ENCODE measurements at regions of chr19 and their contacts with region 1.

Region 1: DNA sequence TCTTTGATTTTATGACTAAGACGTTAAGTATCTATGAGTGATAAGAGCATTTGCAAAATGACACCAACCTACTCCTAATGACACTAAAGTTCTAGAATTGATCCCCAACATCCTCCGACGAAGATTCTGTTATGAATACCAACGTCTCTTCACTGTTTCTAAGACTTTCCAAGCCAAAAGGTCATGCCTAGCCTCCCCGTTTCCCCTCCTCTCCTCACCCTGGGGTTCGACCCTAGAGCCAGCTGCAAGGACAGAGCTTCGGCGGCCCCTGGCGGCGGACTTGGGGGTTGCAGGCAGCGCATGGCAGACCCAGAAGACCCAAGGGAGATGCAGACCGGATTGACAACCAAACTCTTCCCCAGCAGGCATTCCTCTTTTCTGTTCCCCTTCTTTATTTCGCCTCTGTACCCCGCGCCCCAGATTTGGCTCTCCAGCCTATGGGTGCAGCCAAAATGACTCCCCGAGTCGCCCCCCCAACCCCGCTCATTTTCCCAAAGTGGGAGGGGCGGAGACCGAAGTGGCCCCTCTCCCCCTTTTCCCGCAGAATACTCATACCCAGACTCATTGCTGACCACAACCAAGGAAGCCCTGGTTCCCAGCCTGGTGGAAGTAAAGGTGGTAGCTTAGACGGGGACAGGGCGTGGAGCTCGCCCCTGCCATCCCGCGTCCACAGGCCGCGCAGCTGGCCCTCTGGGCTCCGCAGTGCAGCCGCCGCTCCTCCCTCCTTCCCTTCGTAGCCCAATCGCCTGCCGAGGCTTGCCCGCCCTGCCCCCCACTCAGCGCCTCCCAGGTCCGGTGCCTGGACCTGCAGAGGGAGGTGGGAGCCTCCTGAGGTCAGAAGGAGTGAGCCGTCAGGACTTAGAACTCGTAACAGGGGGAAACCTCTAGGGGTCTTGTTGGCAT is 4.1 kb upstream of the EML2 start:
- DNase-seq: peak; percentile 94
- H3K4me3 Mint-ChIP-seq: peak overlapping the region; percentile 63
- H3K27ac Mint-ChIP-seq: peak overlapping the region; percentile 89
- H3K4me1 Mint-ChIP-seq: peaks cover 50% of the 10 kb centered on the region
- H3K27me3 Mint-ChIP-seq: peaks cover 15% of the 10 kb centered on the region
- CTCF ChIP-seq: peak; percentile 99

Region 2: GRCh38 chr19:45478454-45479238 is 164.6 kb before region 1 on chr19:
- CTCF ChIA-PET with region 1: interaction called, 13 read pairs
- intact Hi-C with region 1: no loop called
- DNase-seq: peak; percentile 92
- H3K4me3 Mint-ChIP-seq: peak overlapping the region; percentile 52
- H3K27ac Mint-ChIP-seq: peak overlapping the region; percentile 98
- H3K4me1 Mint-ChIP-seq: peaks cover 31% of the 10 kb centered on the region
- H3K27me3 Mint-ChIP-seq: no peaks in the 10 kb centered on the region
- CTCF ChIP-seq: peak; percentile 99

Region 3: DNA sequence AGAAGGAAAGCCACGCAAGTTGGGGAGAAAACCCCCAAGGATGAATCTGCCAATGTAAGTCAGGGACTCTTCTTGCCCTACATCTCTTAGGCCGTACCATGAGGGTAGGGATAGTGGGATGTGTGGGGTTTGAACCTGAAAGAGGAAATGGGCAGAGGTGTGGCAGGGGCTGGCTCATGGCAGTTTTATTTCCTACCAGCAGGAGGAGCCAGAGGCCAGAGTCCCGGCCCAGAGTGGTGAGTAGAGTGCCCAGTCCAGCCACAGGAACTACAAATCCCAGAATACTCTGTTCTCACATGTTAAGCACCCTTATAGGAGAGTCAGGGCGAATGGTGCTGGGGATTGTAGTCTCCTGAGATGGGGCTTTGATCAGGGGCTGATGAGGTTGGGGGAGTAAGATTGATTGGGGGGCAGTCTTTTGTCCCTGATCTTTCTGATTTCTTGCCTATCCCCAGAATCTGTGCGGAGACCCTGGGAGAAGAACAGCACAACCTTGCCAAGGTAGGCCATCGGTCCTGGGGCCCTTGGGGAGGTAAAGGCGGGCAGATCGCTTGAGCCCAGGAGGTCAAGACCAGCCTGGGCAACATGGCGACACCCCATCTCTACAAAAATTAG is 119.5 kb before region 1 on chr19:
- CTCF ChIA-PET with region 1: interaction called, 19 read pairs
- intact Hi-C with region 1: loop called (anchors 2 kb)
- DNase-seq: peak; percentile 90
- H3K4me3 Mint-ChIP-seq: no peak overlapping the region
- H3K27ac Mint-ChIP-seq: peak overlapping the region; percentile 41
- H3K4me1 Mint-ChIP-seq: peaks cover 36% of the 10 kb centered on the region
- H3K27me3 Mint-ChIP-seq: no peaks in the 10 kb centered on the region
- CTCF ChIP-seq: peak; percentile 90

Region 4: GRCh38 chr19:45584332-45585157 is 58.7 kb before region 1 on chr19 and contains the start of gene OPA3:
- CTCF ChIA-PET with region 1: interaction called, 18 read pairs
- intact Hi-C with region 1: no loop called
- DNase-seq: peak; percentile 99
- H3K4me3 Mint-ChIP-seq: peak within 1 kb of the TSS; percentile 94
- H3K27ac Mint-ChIP-seq: peak within 1 kb of the TSS; percentile 99
- H3K4me1 Mint-ChIP-seq: peaks cover 21% of the 10 kb centered on the region
- H3K27me3 Mint-ChIP-seq: no peaks in the 10 kb centered on the region
- CTCF ChIP-seq: no peak
- total RNA-seq, gene OPA3: 14.2 and 17.1 TPM in 2 replicates

Region 5: DNA sequence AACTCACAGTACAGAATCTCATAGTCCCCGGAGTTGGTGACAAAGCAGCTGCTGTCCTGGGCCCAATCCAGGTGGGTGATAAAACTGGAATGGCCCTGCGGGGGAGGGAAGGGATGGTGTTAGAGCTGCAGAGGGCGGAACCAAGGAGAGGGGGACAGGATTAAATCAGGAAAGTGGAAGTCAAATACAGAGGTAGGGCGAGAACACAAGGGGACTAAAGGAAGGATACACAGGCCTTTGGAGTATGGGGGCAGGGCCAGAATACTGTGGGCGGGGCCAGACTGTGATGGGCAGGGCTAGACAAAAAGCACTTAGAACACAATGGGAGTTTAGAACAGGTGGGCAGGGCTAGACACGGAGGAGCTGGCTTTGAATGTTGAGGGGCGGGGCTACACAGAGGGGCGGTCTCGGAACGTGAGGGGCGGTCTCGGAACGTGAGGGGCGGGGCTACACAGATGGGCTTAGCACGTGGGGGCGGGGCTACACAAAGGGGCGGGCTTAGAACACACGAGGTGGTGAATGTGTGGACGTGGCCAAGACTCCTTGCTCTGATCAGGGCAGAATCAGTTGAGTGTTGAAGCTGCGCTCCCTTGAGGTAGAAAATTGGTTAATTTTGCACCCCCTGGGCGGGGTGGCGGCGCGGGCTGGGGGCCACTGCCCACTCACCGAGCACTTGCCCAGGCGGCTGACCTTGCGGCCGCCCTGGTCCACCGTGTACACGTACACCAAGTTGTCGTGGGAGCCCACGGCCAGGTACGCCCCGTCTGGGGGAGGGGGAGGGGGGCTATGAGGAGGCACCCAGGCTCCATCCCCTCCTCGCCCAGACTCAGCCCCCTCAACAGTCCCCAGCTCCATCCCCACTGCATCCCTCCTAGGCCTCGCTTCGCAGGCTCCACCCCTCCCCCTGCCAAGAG is 27.2 kb before region 1 on chr19:
- CTCF ChIA-PET with region 1: interaction called, 39 read pairs
- intact Hi-C with region 1: loop called (anchors 2 kb)
- DNase-seq: peak; percentile 82
- H3K4me3 Mint-ChIP-seq: no peak overlapping the region
- H3K27ac Mint-ChIP-seq: peak overlapping the region; percentile 70
- H3K4me1 Mint-ChIP-seq: peaks cover 14% of the 10 kb centered on the region
- H3K27me3 Mint-ChIP-seq: no peaks in the 10 kb centered on the region
- CTCF ChIP-seq: no peak

Region 6: GRCh38 chr19:45692187-45693105 is 49.2 kb after region 1 on chr19 and contains the start of gene QPCTL:
- CTCF ChIA-PET with region 1: interaction called, 11 read pairs
- intact Hi-C with region 1: no loop called
- DNase-seq: peak; percentile 99
- H3K4me3 Mint-ChIP-seq: peak within 1 kb of the TSS; percentile 82
- H3K27ac Mint-ChIP-seq: peak within 1 kb of the TSS; percentile 90
- H3K4me1 Mint-ChIP-seq: peaks cover 3% of the 10 kb centered on the region
- H3K27me3 Mint-ChIP-seq: no peaks in the 10 kb centered on the region
- CTCF ChIP-seq: no peak
- total RNA-seq, gene QPCTL: 20.4 and 20.7 TPM in 2 replicates

Region 7: GRCh38 chr19:45717166-45717982 is 74.1 kb after region 1 on chr19:
- CTCF ChIA-PET with region 1: no interaction called
- intact Hi-C with region 1: no loop called
- DNase-seq: peak; percentile 99
- H3K4me3 Mint-ChIP-seq: peak overlapping the region; percentile 90
- H3K27ac Mint-ChIP-seq: peak overlapping the region; percentile 96
- H3K4me1 Mint-ChIP-seq: peaks cover 26% of the 10 kb centered on the region
- H3K27me3 Mint-ChIP-seq: no peaks in the 10 kb centered on the region
- CTCF ChIP-seq: no peak

Region 8: GRCh38 chr19:45730389-45731288 is 87.4 kb after region 1 on chr19 and contains the start of gene FBXO46:
- CTCF ChIA-PET with region 1: no interaction called
- intact Hi-C with region 1: no loop called
- DNase-seq: peak; percentile 97
- H3K4me3 Mint-ChIP-seq: peak within 1 kb of the TSS; percentile 97
- H3K27ac Mint-ChIP-seq: peak within 1 kb of the TSS; percentile 83
- H3K4me1 Mint-ChIP-seq: peaks cover 26% of the 10 kb centered on the region
- H3K27me3 Mint-ChIP-seq: no peaks in the 10 kb centered on the region
- CTCF ChIP-seq: no peak
- total RNA-seq, gene FBXO46: 43.8 and 53.6 TPM in 2 replicates